ENCODE measurements at regions of chrX and their contacts with region 1.

Region 1: DNA sequence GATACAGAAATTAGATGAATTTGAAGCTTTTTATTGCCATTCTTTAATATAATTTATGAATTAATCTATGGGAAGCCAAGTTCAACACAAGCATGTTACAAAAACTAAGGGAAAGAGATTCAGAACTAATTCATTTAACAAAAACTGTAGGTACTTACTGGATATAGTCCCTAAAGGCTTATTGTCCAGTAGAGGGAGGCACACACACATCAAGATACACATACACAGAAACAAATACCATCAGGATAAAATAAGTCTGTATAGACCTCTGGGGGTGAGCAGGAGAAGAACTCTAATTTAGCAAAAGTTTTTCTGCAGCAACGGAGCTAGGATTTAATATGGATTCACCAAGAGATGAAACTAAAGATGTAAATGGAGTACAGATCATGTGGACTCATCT is 83.0 kb upstream of the IL13RA1 start:
- DNase-seq: peak; percentile 27
- ATAC-seq: peak; percentile 98
- H3K4me3 ChIP-seq: no peak overlapping the region
- H3K27ac ChIP-seq: no peak overlapping the region
- H3K4me1 ChIP-seq: peaks cover 3% of the 10 kb centered on the region; the same call in 1 of the 2 replicates
- H3K27me3 ChIP-seq: no peaks in the 10 kb centered on the region
- CTCF ChIP-seq: peak; percentile 67; the same call in 1 of the 2 replicates

Region 2: DNA sequence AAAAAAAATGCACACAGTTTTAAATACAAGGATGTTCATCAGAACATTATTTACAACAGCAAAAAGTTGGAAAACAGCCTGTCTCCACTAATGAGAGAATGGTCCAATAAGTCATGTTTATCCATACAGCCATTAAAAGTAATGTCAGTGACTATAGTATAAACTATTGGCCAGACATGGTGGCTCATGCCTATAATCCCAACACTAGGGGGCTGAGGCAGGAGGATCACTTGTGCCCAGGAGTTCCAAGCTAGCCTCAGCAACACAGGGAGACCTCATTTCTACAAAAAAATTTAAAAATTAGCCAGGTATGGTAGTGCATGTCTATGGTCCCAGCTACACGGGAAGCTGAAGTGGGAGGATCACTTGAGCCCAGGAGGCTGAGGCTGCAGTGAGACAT is 34.9 kb after region 1 on chrX:
- CTCF ChIA-PET with region 1: no interaction called
- POLR2A ChIA-PET with region 1: no interaction called
- in situ Hi-C with region 1: no loop called
- intact Hi-C with region 1: no loop called
- DNase-seq: no peak
- ATAC-seq: no peak
- H3K4me3 ChIP-seq: no peak overlapping the region
- H3K27ac ChIP-seq: no peak overlapping the region
- H3K4me1 ChIP-seq: peaks cover 10% of the 10 kb centered on the region
- H3K27me3 ChIP-seq: no peaks in the 10 kb centered on the region
- CTCF ChIP-seq: peak; percentile 31; the same call in 1 of the 2 replicates

Region 3: DNA sequence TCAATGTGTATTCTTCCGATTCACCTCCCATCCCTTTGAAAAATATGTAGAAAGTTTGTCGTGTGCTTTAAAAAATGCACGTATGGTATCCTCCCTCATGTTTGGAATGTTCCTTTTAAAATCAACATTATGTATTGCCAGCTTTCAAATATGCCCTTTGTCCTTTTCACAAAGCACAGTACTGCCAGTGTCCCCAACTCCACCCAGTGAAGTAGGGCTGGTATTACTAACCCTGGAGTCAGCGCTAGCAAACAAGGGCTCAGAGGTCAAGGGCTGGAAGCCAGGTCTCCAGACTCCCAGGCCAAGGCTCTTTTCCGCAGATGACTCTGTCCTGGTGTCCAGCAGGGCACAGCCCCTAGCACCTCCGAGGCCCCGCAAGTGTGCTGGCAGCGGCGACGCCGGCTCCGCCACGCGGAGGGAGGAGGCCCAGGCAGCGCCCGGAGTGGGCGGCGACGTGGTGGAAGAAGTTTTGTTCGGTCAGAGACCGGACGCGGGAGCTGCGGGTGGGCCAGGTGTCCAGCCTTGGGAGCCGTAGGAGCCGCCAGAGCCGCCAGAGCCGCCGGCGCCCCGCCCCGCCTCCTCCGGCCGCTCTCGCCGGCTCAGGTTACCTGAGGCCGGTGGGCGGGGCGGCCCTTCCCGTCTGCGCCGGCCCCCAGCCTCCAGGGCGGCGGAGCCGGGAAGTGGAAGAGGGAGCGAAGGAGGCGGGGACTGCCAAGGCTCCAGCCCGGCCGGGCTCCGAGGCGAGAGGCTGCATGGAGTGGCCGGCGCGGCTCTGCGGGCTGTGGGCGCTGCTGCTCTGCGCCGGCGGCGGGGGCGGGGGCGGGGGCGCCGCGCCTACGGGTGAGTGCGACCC is 82.7 kb after region 1 on chrX and contains the start of gene IL13RA1:
- CTCF ChIA-PET with region 1: interaction called, 5 read pairs
- POLR2A ChIA-PET with region 1: no interaction called
- in situ Hi-C with region 1: no loop called
- intact Hi-C with region 1: loop called (anchors 10 kb)
- DNase-seq: peak; percentile 74
- ATAC-seq: peak; percentile 93
- H3K4me3 ChIP-seq: peak within 1 kb of the TSS; percentile 55 to 90
- H3K27ac ChIP-seq: peak within 1 kb of the TSS; percentile 98
- H3K4me1 ChIP-seq: peaks cover 57% of the 10 kb centered on the region
- H3K27me3 ChIP-seq: no peaks in the 10 kb centered on the region
- CTCF ChIP-seq: no peak
- total RNA-seq, gene IL13RA1: 191 TPM